Thyroid gland (tissue), 4 donors: ENCODE measurements at regions of chr10 and their contacts with region 1.

Region 1: GRCh38 chr10:131312478-131312836 is 936 bp upstream of the TCERG1L start:
- DNase-seq: peak; percentile 51 to 53
- H3K4me3 ChIP-seq: peak overlapping the region in 1 of 3 donors; percentile 54
- H3K27ac ChIP-seq: peak overlapping the region in 2 of 3 donors; percentile 46 to 84
- H3K4me1 ChIP-seq: peaks cover 4 to 9% of the 10 kb centered on the region in 2 donors
- H3K27me3 ChIP-seq: no peaks in the 10 kb centered on the region
- CTCF ChIP-seq: peak; percentile 37 to 76 (median 62)
- POLR2A ChIP-seq: peak in 1 of 2 donors; percentile 15

Region 2: GRCh38 chr10:131119626-131120355 is 192.7 kb before region 1 on chr10:
- intact Hi-C with region 1: no loop called
- DNase-seq: no peak
- H3K4me3 ChIP-seq: no peak overlapping the region
- H3K27ac ChIP-seq: no peak overlapping the region
- H3K4me1 ChIP-seq: no peaks in the 10 kb centered on the region
- H3K27me3 ChIP-seq: no peaks in the 10 kb centered on the region
- CTCF ChIP-seq: no peak
- POLR2A ChIP-seq: no peak

Region 3: GRCh38 chr10:131131726-131132591 is 180.5 kb before region 1 on chr10:
- intact Hi-C with region 1: loop called (anchors 10 kb)
- DNase-seq: no peak
- H3K4me3 ChIP-seq: no peak overlapping the region
- H3K27ac ChIP-seq: no peak overlapping the region
- H3K4me1 ChIP-seq: peaks cover 7 to 13% of the 10 kb centered on the region in 2 donors
- H3K27me3 ChIP-seq: no peaks in the 10 kb centered on the region
- CTCF ChIP-seq: no peak
- POLR2A ChIP-seq: no peak

Region 4: DNA sequence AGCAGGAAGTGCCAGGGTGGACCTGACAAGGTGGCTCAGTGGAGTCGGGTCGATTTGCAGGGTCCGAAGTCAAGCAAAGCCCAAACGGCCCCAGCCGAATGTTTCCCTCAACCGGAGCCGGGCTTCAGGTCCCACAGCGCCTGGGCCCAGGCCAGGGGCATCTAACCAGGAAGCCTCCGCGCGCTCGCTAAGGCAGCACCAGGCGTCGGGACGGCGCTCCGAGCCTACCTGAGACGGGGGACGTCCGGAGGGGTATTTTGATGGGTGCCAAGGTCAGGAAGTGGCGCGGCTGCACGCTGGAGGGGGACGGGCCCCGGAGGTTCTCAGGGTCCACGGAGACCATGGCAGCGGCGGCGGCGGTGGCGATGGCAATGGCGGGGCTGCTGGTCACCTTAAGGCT is 52.4 kb before region 1 on chr10:
- intact Hi-C with region 1: no loop called
- DNase-seq: no peak
- H3K4me3 ChIP-seq: no peak overlapping the region
- H3K27ac ChIP-seq: no peak overlapping the region
- H3K4me1 ChIP-seq: peaks cover 6 to 14% of the 10 kb centered on the region in 2 donors
- H3K27me3 ChIP-seq: no peaks in the 10 kb centered on the region
- CTCF ChIP-seq: no peak
- POLR2A ChIP-seq: no peak